HEK293T (cell line): ENCODE measurements at regions of chr9 and their contacts with region 1.

Region 1: DNA sequence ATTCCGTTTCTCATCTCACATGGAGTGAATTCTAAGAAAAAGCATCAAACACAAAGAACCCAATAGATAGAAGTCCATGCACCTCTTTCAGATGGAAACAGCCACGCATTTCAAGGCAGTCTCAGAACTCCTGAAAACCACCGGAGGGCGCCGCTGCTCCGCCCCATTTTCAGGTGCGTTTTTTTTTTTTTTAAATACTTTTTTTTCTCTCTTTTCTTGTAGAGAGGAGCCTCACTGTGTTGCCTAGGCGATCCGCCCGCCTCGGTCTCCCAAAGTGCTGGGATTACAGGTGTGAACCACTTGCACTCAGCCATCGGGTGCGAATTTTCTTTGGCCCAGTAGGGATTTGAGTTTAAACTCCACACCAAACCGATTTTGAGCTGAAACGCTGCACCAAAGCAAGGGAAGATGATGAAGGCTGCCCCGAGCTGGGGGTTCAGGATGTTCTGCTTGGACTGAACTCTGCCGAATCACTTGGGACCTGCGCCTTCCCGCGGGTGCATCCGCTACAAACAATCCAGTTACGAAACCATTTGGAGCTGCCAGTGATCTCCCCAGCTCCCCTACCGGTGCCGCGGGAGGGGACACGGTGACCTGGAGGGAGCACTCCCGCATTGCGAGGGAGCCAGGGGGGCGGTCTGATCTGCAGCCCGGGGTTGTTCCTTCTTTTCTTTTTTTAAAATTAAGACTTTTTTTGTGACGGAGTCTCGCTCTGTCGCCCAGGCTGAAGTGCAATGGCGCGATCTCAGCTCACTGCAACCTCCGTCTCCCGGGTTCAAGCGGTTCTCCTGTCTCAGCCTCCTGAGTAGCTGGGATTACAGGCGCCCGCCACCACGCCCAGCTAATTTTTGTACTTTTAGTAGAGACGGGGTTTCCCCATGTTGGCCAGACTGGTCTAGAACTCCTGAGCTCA is 1.4 kb downstream of the PTGR1 start:
- DNase-seq: peak; percentile 27

Region 2: GRCh38 chr9:111582888-111583287 is 15.2 kb before region 1 on chr9:
- CTCF ChIA-PET with region 1: no interaction called
- POLR2A ChIA-PET with region 1: no interaction called
- DNase-seq: no peak

Region 3: DNA sequence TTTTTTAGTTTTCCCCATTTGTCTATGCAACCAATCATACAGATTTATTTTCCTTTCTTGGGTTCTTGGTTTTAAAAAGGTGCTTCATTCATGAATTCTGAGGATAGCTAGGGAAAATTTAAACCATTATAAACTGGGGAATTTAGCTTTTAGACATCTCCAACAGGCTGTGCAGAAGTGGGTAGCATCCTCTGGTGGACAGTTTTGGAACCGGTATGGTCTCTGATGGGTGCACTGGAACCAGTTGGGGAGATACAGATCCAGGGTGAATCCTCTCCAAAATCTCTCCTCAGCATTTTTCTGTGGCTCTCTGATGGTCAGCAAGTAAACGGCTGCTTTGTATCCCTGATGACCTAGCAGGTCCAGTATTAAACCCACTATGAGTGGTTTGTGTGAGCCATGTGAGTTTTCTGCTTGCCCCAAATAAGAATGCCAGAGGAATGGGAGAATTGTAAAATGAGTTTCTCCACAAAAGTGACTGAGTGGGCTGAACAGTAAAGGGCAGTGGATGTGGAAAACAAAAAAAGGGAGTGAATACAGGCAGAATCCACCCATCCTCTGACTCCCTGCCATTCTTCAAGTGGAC is 23.9 kb after region 1 on chr9:
- CTCF ChIA-PET with region 1: interaction called, 10 read pairs
- POLR2A ChIA-PET with region 1: interaction called, 9 read pairs
- DNase-seq: peak; percentile 31